CD8-positive, alpha-beta memory T cell (primary cell): ENCODE measurements at regions of chr6 and their contacts with region 1.

Region 1: GRCh38 chr6:106444777-106445507 is 84.4 kb downstream of the CRYBG1 start:
- DNase-seq: peak in 3 of 5 donors; percentile 9 to 66 (median 63)
- H3K4me3 ChIP-seq: no peak overlapping the region
- H3K4me3 Mint-ChIP-seq: no peak overlapping the region
- H3K27ac ChIP-seq: no peak overlapping the region
- H3K27ac Mint-ChIP-seq: no peak overlapping the region
- H3K4me1 ChIP-seq: peaks cover 12% of the 10 kb centered on the region
- H3K4me1 Mint-ChIP-seq: peaks cover 11 to 13% (median 12%) of the 10 kb centered on the region in 3 donors
- H3K27me3 ChIP-seq: no peaks in the 10 kb centered on the region
- H3K27me3 Mint-ChIP-seq: peaks cover 9 to 38% of the 10 kb centered on the region in 2 donors

Region 2: GRCh38 chr6:106194949-106195921 is 249.7 kb before region 1 on chr6:
- CTCF ChIA-PET with region 1: no interaction called
- POLR2A ChIA-PET with region 1: no interaction called
- DNase-seq: peak in 3 of 5 donors; percentile 6 to 56 (median 34)
- H3K4me3 ChIP-seq: peak overlapping the region; percentile 27
- H3K4me3 Mint-ChIP-seq: peak overlapping the region; percentile 70 to 87 (median 72)
- H3K27ac ChIP-seq: peak overlapping the region; percentile 4
- H3K27ac Mint-ChIP-seq: peak overlapping the region; percentile 71 to 96 (median 89)
- H3K4me1 ChIP-seq: peaks cover 46% of the 10 kb centered on the region
- H3K4me1 Mint-ChIP-seq: peaks cover 38 to 57% (median 44%) of the 10 kb centered on the region in 3 donors
- H3K27me3 ChIP-seq: no peaks in the 10 kb centered on the region
- H3K27me3 Mint-ChIP-seq: no peaks in the 10 kb centered on the region

Region 3: GRCh38 chr6:106461084-106461483 is 16.1 kb after region 1 on chr6:
- CTCF ChIA-PET with region 1: interaction called, 3 read pairs
- POLR2A ChIA-PET with region 1: interaction called, 12 read pairs
- DNase-seq: no peak
- H3K4me3 ChIP-seq: no peak overlapping the region
- H3K4me3 Mint-ChIP-seq: no peak overlapping the region
- H3K27ac ChIP-seq: no peak overlapping the region
- H3K27ac Mint-ChIP-seq: no peak overlapping the region
- H3K4me1 ChIP-seq: no peaks in the 10 kb centered on the region
- H3K4me1 Mint-ChIP-seq: no peaks in the 10 kb centered on the region
- H3K27me3 ChIP-seq: no peaks in the 10 kb centered on the region
- H3K27me3 Mint-ChIP-seq: peaks cover 6 to 32% of the 10 kb centered on the region in 2 donors

Region 4: DNA sequence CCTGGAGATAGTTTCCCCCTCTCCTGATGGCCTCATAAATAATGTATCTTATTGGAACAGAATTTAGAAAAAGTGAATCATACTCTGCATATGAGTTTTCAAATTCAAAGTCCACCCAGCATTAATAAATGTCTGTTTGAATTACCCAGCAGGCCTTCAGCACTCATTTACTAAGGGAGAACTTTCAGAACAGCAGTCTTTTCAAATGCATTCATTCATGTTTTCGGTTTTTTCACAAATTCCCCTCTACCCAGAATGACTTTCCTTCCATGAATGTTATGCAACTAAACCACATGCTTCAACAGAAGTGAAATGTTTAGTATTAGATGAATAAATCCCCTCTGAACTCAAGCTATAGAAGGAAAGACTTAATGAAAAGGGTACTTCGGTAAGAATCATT is 91.9 kb after region 1 on chr6:
- CTCF ChIA-PET with region 1: no interaction called
- POLR2A ChIA-PET with region 1: no interaction called
- DNase-seq: no peak
- H3K4me3 ChIP-seq: no peak overlapping the region
- H3K4me3 Mint-ChIP-seq: peak overlapping the region in 3 of 7 donors; percentile 40 to 52 (median 47)
- H3K27ac ChIP-seq: no peak overlapping the region
- H3K27ac Mint-ChIP-seq: peak overlapping the region in 7 of 8 donors; percentile 67 to 98 (median 79)
- H3K4me1 ChIP-seq: peaks cover 42% of the 10 kb centered on the region
- H3K4me1 Mint-ChIP-seq: peaks cover 57 to 79% (median 78%) of the 10 kb centered on the region in 3 donors
- H3K27me3 ChIP-seq: no peaks in the 10 kb centered on the region
- H3K27me3 Mint-ChIP-seq: peaks cover 0 to 1% of the 10 kb centered on the region in 2 donors

Region 5: GRCh38 chr6:106556368-106556960 is 111.5 kb after region 1 on chr6:
- CTCF ChIA-PET with region 1: interaction called, 24 read pairs
- POLR2A ChIA-PET with region 1: no interaction called
- DNase-seq: peak in 2 of 5 donors; percentile 24 to 42
- H3K4me3 ChIP-seq: no peak overlapping the region
- H3K4me3 Mint-ChIP-seq: no peak overlapping the region
- H3K27ac ChIP-seq: no peak overlapping the region
- H3K27ac Mint-ChIP-seq: peak overlapping the region in 1 of 8 donors; percentile 45
- H3K4me1 ChIP-seq: no peaks in the 10 kb centered on the region
- H3K4me1 Mint-ChIP-seq: peaks cover 0 to 6% (median 2%) of the 10 kb centered on the region in 3 donors
- H3K27me3 ChIP-seq: no peaks in the 10 kb centered on the region
- H3K27me3 Mint-ChIP-seq: no peaks in the 10 kb centered on the region

Region 6: DNA sequence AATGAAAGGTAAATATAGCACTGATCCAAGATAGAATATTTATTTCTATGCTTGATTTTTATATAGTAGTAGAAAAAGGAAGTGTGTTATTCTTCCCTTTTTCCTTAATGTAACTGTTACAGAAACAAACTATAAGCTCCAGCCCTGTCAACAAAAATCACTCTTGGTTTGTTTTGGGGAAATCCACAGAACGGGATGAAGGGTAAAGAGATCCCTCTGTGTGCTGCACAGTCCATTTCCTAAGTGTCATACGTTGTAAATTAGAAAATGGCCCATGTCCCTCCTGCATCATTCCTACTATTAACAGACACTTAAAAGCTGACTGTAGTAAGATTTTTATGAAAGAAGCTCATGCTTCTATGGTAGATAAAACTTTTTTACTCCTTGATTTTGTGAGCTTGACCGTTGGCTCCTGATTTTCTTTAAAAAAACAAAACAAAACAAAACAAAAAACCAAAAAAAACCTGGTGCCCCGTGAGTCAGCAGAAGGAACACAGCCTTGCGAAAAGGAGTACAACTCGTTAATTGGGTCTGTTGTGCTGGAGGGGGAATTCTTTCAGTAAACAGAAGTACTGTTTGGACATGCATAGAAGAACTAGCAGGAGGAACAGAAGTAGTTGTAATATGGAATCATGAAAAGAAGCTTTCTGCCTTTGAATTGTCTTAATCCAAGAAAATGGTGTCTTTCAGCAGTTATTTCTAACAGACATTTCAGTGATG is 116.9 kb after region 1 on chr6:
- CTCF ChIA-PET with region 1: interaction called, 74 read pairs
- POLR2A ChIA-PET with region 1: interaction called, 9 read pairs
- DNase-seq: no peak
- H3K4me3 ChIP-seq: no peak overlapping the region
- H3K4me3 Mint-ChIP-seq: no peak overlapping the region
- H3K27ac ChIP-seq: no peak overlapping the region
- H3K27ac Mint-ChIP-seq: peak overlapping the region in 5 of 8 donors; percentile 12 to 86 (median 27)
- H3K4me1 ChIP-seq: no peaks in the 10 kb centered on the region
- H3K4me1 Mint-ChIP-seq: peaks cover 0 to 5% (median 2%) of the 10 kb centered on the region in 3 donors
- H3K27me3 ChIP-seq: no peaks in the 10 kb centered on the region
- H3K27me3 Mint-ChIP-seq: no peaks in the 10 kb centered on the region

Region 7: DNA sequence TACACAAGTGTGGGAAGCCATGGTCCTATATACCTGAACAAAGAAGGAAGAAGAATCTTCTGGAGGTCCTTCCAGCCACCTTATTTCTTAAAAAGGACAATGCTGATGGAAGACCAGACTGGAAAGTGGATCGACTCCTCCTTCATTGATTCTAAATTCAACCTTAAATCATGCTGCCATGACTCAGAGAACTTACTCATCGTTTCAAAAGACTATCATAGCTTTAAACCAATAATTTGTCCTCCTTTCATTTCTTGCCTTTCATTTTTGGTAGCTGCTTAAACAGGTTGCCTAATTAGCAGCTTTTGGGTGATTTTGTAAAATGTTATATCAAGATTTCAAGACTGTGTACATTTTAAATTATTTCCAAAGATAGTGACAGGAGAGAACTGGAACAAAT is 123.6 kb after region 1 on chr6:
- CTCF ChIA-PET with region 1: interaction called, 74 read pairs
- POLR2A ChIA-PET with region 1: interaction called, 9 read pairs
- DNase-seq: no peak
- H3K4me3 ChIP-seq: no peak overlapping the region
- H3K4me3 Mint-ChIP-seq: no peak overlapping the region
- H3K27ac ChIP-seq: no peak overlapping the region
- H3K27ac Mint-ChIP-seq: peak overlapping the region in 5 of 8 donors; percentile 4 to 70 (median 21)
- H3K4me1 ChIP-seq: no peaks in the 10 kb centered on the region
- H3K4me1 Mint-ChIP-seq: peaks cover 0 to 5% (median 2%) of the 10 kb centered on the region in 3 donors
- H3K27me3 ChIP-seq: no peaks in the 10 kb centered on the region
- H3K27me3 Mint-ChIP-seq: no peaks in the 10 kb centered on the region

Region 8: GRCh38 chr6:106979427-106979884 is 534.5 kb after region 1 on chr6:
- CTCF ChIA-PET with region 1: interaction called, 25 read pairs
- POLR2A ChIA-PET with region 1: no interaction called
- DNase-seq: peak; percentile 47 to 78 (median 67)
- H3K4me3 ChIP-seq: no peak overlapping the region
- H3K4me3 Mint-ChIP-seq: no peak overlapping the region
- H3K27ac ChIP-seq: no peak overlapping the region
- H3K27ac Mint-ChIP-seq: no peak overlapping the region
- H3K4me1 ChIP-seq: no peaks in the 10 kb centered on the region
- H3K4me1 Mint-ChIP-seq: peaks cover 5 to 9% (median 7%) of the 10 kb centered on the region in 3 donors
- H3K27me3 ChIP-seq: peaks cover 10% of the 10 kb centered on the region
- H3K27me3 Mint-ChIP-seq: peaks cover 51 to 54% of the 10 kb centered on the region in 2 donors